MCF 10A (cell line): ENCODE measurements at regions of chr1 and their contacts with region 1.

Region 1: GRCh38 chr1:220217383-220217988 is 54.8 kb downstream of the RAB3GAP2 start:
- DNase-seq: peak; percentile 55
- H3K4me3 Mint-ChIP-seq: no peak overlapping the region
- H3K27ac Mint-ChIP-seq: no peak overlapping the region
- H3K4me1 Mint-ChIP-seq: peaks cover 25% of the 10 kb centered on the region
- H3K27me3 Mint-ChIP-seq: no peaks in the 10 kb centered on the region
- CTCF ChIP-seq: peak; percentile 52

Region 2: DNA sequence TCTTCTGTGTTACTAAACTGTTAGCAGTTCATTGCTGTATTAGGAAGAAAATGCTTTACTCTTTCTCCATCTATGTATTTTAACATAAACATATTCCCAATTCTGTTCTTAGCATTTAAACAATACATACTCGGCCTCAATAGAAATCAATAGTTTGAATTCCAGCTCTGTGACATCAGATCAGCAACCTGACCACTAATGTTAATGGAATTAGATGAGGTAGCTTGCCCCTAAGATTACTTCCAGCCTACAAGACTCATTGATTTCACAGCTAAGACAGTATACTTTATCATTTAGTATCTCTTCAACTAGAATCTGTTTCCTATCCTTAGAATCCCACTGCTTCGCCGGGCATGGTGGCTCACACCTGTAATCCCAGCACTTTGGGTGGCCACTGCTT is 210.0 kb before region 1 on chr1:
- CTCF ChIA-PET with region 1: no interaction called
- POLR2A ChIA-PET with region 1: no interaction called
- intact Hi-C with region 1: no loop called
- DNase-seq: no peak
- H3K4me3 Mint-ChIP-seq: no peak overlapping the region
- H3K27ac Mint-ChIP-seq: peak overlapping the region; percentile 3
- H3K4me1 Mint-ChIP-seq: peaks cover 7% of the 10 kb centered on the region
- H3K27me3 Mint-ChIP-seq: no peaks in the 10 kb centered on the region
- CTCF ChIP-seq: no peak

Region 3: DNA sequence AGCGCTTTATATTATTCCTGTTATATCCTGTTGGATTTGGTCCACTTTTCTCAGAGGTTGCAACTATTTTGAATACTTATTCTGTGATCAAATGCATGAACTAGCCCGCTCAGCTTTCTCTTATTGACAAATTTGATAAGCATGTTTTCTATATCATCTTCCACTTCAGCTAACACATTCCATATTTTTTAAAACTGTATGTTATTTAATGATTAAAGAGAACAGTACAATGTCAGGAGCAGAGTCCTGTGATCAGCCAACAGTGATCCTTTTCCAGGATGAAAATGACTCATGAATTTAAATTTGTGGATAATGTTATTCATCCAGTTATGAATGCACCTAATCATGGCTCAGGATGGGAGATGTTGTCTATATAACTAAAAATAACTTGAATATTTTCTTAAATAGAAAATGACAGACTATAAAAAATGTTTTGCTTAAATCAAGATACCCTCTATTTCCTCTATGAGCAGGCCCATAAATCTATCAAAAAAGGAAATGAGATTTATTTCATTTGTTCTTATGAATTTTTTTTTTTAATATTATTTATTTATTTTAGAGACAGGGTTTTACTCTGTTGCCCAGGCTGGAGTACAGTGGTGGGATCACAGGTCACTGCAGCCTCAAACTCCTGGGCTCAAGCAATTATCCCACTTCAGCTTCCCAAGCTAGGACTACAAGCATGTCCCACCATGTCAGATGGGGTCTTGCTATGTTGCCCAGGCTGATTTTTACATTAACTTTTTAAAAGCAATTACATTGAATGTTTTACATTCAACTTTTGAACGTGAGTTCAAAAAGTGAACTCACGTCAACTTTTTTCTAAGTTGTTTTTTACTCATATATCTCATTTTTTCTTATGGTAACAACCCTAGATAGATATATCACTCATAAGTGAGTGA is 140.4 kb before region 1 on chr1:
- CTCF ChIA-PET with region 1: no interaction called
- POLR2A ChIA-PET with region 1: no interaction called
- intact Hi-C with region 1: no loop called
- DNase-seq: no peak
- H3K4me3 Mint-ChIP-seq: no peak overlapping the region
- H3K27ac Mint-ChIP-seq: no peak overlapping the region
- H3K4me1 Mint-ChIP-seq: no peaks in the 10 kb centered on the region
- H3K27me3 Mint-ChIP-seq: no peaks in the 10 kb centered on the region
- CTCF ChIP-seq: no peak

Region 4: GRCh38 chr1:220189750-220190347 is 27.6 kb before region 1 on chr1:
- CTCF ChIA-PET with region 1: interaction called, 73 read pairs
- POLR2A ChIA-PET with region 1: interaction called, 4 read pairs
- intact Hi-C with region 1: no loop called
- DNase-seq: peak; percentile 64
- H3K4me3 Mint-ChIP-seq: no peak overlapping the region
- H3K27ac Mint-ChIP-seq: no peak overlapping the region
- H3K4me1 Mint-ChIP-seq: no peaks in the 10 kb centered on the region
- H3K27me3 Mint-ChIP-seq: no peaks in the 10 kb centered on the region
- CTCF ChIP-seq: peak; percentile 66

Region 5: GRCh38 chr1:220207411-220207810 is 10.1 kb before region 1 on chr1:
- CTCF ChIA-PET with region 1: interaction called, 33 read pairs
- POLR2A ChIA-PET with region 1: interaction called, 6 read pairs
- intact Hi-C with region 1: no loop called
- DNase-seq: no peak
- H3K4me3 Mint-ChIP-seq: no peak overlapping the region
- H3K27ac Mint-ChIP-seq: no peak overlapping the region
- H3K4me1 Mint-ChIP-seq: no peaks in the 10 kb centered on the region
- H3K27me3 Mint-ChIP-seq: no peaks in the 10 kb centered on the region
- CTCF ChIP-seq: no peak

Region 6: DNA sequence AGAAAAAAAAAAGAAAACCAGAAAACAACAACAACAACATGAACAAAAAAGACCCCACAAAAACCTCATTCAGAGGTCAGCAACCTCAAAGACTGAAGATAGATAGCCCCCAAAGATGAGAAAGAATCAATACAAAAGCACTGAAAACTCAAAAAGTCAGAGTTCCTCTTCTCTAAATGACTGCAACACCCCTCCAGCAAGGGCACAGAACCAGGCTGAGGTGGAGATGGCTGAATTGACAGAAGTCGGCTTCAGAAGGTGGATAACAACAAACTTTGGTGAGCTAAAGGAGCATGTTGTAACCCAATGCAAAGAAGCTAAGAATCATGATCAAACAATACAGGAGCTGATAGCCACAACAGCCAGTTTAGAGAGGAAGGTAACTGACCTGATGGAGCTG is 37.7 kb after region 1 on chr1:
- CTCF ChIA-PET with region 1: interaction called, 10 read pairs
- POLR2A ChIA-PET with region 1: no interaction called
- intact Hi-C with region 1: no loop called
- DNase-seq: no peak
- H3K4me3 Mint-ChIP-seq: no peak overlapping the region
- H3K27ac Mint-ChIP-seq: peak overlapping the region; percentile 1
- H3K4me1 Mint-ChIP-seq: peaks cover 5% of the 10 kb centered on the region
- H3K27me3 Mint-ChIP-seq: no peaks in the 10 kb centered on the region
- CTCF ChIP-seq: no peak

Region 7: DNA sequence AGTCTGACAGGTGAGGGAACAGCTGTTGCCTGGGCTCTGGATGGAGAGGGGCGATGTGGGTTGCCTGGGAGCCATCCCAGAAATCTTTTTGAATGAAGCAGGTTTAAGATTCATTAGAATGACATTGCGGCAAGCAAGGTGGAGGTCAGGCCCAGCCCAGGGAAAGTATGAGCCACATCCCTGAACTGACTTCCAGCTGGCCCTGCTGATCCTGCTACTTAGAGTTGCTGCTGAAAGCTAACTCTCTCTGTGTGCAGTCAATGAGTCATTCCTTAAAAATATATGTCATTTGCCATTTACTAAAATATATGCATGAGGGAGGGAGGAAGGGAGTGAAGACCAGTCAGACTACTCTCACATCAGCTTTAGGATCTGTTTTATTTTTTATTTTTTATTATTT is 109.1 kb after region 1 on chr1:
- CTCF ChIA-PET with region 1: no interaction called
- POLR2A ChIA-PET with region 1: no interaction called
- intact Hi-C with region 1: no loop called
- DNase-seq: peak; percentile 57
- H3K4me3 Mint-ChIP-seq: no peak overlapping the region
- H3K27ac Mint-ChIP-seq: peak overlapping the region; percentile 11
- H3K4me1 Mint-ChIP-seq: peaks cover 8% of the 10 kb centered on the region
- H3K27me3 Mint-ChIP-seq: no peaks in the 10 kb centered on the region
- CTCF ChIP-seq: no peak

Region 8: GRCh38 chr1:220483700-220484099 is 266.2 kb after region 1 on chr1:
- CTCF ChIA-PET with region 1: interaction called, 4 read pairs
- POLR2A ChIA-PET with region 1: no interaction called
- intact Hi-C with region 1: loop called (anchors 1 kb)
- DNase-seq: no peak
- H3K4me3 Mint-ChIP-seq: no peak overlapping the region
- H3K27ac Mint-ChIP-seq: no peak overlapping the region
- H3K4me1 Mint-ChIP-seq: peaks cover 4% of the 10 kb centered on the region
- H3K27me3 Mint-ChIP-seq: no peaks in the 10 kb centered on the region
- CTCF ChIP-seq: no peak

Region 9: DNA sequence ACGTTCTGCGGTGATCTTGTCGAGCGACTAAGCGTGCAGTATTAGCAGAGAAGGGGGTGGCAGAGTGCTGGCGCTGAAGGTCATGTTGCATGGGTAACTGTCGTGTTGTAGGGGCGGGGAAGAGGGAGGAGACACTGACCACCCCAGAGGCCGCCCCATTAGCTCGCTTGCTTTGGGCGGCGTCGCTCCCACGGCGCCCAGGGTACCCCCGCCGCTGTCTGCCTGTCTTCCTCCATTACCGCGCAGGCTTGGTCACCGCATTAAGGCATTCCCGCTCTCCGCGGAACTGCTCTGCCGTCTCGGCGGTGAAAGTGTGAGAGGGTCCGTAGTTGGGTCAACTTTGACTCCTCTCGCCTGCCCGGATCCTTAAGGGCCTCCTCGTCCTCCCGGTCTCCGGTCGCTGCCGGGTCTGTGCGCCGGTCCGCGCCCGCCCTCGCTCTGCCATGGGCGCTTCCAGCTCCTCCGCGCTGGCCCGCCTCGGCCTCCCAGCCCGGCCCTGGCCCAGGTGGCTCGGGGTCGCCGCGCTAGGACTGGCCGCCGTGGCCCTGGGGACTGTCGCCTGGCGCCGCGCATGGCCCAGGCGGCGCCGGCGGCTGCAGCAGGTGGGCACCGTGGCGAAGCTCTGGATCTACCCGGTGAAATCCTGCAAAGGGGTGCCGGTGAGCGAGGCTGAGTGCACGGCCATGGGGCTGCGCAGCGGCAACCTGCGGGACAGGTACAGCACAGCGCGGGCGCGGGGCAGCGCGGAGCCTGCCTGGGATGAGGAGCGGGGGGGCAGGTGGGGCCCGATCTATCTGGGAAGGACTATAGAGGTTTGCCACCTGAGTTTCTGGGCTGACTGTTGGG is 530.8 kb after region 1 on chr1 and contains the start of gene MTARC2:
- CTCF ChIA-PET with region 1: interaction called, 10 read pairs
- POLR2A ChIA-PET with region 1: no interaction called
- intact Hi-C with region 1: no loop called
- DNase-seq: peak; percentile 77
- H3K4me3 Mint-ChIP-seq: peak within 1 kb of the TSS; percentile 71
- H3K27ac Mint-ChIP-seq: no peak within 1 kb of the TSS
- H3K4me1 Mint-ChIP-seq: no peaks in the 10 kb centered on the region
- H3K27me3 Mint-ChIP-seq: no peaks in the 10 kb centered on the region
- CTCF ChIP-seq: no peak
- total RNA-seq, gene MTARC2: 3.6 and 5.2 TPM in 2 replicates

Region 10: DNA sequence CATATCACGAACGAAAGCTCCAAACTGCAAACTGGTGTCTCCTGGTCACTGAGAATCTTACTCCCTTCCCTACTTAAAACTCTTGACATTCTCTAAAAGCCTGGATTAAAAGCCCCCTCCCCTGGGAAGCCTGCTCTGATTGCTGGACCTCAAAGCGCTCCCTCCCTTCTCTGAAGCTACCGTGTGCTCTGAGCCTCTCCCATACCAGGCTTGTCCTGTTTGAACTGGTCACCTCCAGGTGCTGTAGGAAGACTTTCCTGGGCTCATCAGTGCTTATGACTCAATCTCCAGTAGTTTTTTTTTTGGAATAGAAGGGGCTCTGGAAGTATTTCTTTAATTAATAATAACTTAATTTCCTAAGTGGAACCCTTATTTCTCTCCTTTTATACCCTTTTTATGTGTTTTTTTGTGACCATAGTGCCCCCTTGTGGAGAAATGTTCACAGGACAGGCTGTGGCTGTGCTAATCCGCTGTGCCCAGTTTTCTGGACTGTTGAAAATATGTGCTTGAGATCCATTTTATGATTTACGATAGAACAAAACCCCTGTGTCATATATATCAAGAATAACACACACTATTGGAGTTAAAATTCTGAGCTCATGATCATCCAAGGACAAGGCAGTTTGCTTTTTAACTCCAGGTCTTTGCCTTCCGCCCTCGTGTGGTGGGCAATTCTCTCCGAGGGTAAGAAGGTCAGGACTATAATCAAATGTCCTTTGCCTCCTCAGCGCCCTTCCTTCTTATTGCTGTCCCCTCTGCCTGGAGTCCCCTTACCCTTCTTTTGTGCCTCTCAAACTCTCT is 586.1 kb after region 1 on chr1:
- CTCF ChIA-PET with region 1: interaction called, 15 read pairs
- POLR2A ChIA-PET with region 1: no interaction called
- intact Hi-C with region 1: no loop called
- DNase-seq: peak; percentile 74
- H3K4me3 Mint-ChIP-seq: no peak overlapping the region
- H3K27ac Mint-ChIP-seq: no peak overlapping the region
- H3K4me1 Mint-ChIP-seq: no peaks in the 10 kb centered on the region
- H3K27me3 Mint-ChIP-seq: no peaks in the 10 kb centered on the region
- CTCF ChIP-seq: peak; percentile 97

Region 11: GRCh38 chr1:220966881-220967611 is 749.6 kb after region 1 on chr1:
- CTCF ChIA-PET with region 1: no interaction called
- POLR2A ChIA-PET with region 1: no interaction called
- intact Hi-C with region 1: no loop called
- DNase-seq: no peak
- H3K4me3 Mint-ChIP-seq: no peak overlapping the region
- H3K27ac Mint-ChIP-seq: no peak overlapping the region
- H3K4me1 Mint-ChIP-seq: peaks cover 8% of the 10 kb centered on the region
- H3K27me3 Mint-ChIP-seq: no peaks in the 10 kb centered on the region
- CTCF ChIP-seq: no peak